Uterus (tissue), 4 donors: ENCODE measurements at regions of chr19 and their contacts with region 1.

Region 1: GRCh38 chr19:13850293-13850909 is 26.5 kb upstream of the NANOS3 start:
- DNase-seq: peak; percentile 79 to 92
- H3K4me3 ChIP-seq: peak overlapping the region; percentile 36 to 37
- H3K27ac ChIP-seq: peak overlapping the region; percentile 100
- H3K4me1 ChIP-seq: peaks cover 14 to 35% of the 10 kb centered on the region in 2 donors
- H3K27me3 ChIP-seq: no peaks in the 10 kb centered on the region
- CTCF ChIP-seq: no peak
- POLR2A ChIP-seq: peak in 1 of 2 donors; percentile 67

Region 2: DNA sequence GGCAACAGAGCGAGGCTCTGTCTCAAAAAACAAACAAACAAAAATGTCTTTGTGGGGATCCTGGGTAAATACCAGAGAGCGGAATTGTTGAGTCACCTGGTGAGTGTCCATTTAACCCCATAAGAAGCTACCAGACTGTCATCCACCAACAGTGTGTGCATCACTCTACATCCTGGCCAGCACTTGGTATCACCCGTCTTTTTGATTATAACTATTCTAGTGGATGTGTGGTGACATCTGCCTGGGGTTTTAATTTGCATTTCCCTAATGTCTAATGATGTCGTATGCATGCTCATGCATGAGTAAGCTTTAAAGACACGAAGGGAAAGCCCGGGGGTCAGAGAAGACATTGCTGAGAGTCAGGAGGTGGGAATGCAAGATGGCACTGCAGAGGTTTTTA is 212.7 kb before region 1 on chr19:
- intact Hi-C with region 1: no loop called
- DNase-seq: no peak
- H3K4me3 ChIP-seq: no peak overlapping the region
- H3K27ac ChIP-seq: no peak overlapping the region
- H3K4me1 ChIP-seq: no peaks in the 10 kb centered on the region
- H3K27me3 ChIP-seq: no peaks in the 10 kb centered on the region
- CTCF ChIP-seq: no peak
- POLR2A ChIP-seq: no peak

Region 3: GRCh38 chr19:13774217-13775191 is 75.9 kb before region 1 on chr19 and contains the start of gene C19orf53:
- intact Hi-C with region 1: no loop called
- DNase-seq: peak; percentile 89 to 90
- H3K4me3 ChIP-seq: peak within 1 kb of the TSS; percentile 85 to 99
- H3K27ac ChIP-seq: peak within 1 kb of the TSS; percentile 86 to 95
- H3K4me1 ChIP-seq: peaks cover 0 to 9% of the 10 kb centered on the region in 2 donors
- H3K27me3 ChIP-seq: no peaks in the 10 kb centered on the region
- CTCF ChIP-seq: peak in 2 of 4 experiments; percentile 26 to 43
- POLR2A ChIP-seq: peak; percentile 73 to 91
- total RNA-seq, gene C19orf53: 20.5 to 233 (median 77.3) TPM

Region 4: GRCh38 chr19:13794757-13795589 is 55.4 kb before region 1 on chr19 and contains the start of gene ZSWIM4:
- intact Hi-C with region 1: loop called (anchors 5 kb)
- DNase-seq: peak; percentile 98 to 99
- H3K4me3 ChIP-seq: peak within 1 kb of the TSS; percentile 76 to 95
- H3K27ac ChIP-seq: peak within 1 kb of the TSS; percentile 88 to 99
- H3K4me1 ChIP-seq: peaks cover 10 to 17% of the 10 kb centered on the region in 2 donors
- H3K27me3 ChIP-seq: no peaks in the 10 kb centered on the region
- CTCF ChIP-seq: no peak
- POLR2A ChIP-seq: peak; percentile 61 to 63
- total RNA-seq, gene ZSWIM4: 0.26 to 8.4 (median 6.0) TPM

Region 5: DNA sequence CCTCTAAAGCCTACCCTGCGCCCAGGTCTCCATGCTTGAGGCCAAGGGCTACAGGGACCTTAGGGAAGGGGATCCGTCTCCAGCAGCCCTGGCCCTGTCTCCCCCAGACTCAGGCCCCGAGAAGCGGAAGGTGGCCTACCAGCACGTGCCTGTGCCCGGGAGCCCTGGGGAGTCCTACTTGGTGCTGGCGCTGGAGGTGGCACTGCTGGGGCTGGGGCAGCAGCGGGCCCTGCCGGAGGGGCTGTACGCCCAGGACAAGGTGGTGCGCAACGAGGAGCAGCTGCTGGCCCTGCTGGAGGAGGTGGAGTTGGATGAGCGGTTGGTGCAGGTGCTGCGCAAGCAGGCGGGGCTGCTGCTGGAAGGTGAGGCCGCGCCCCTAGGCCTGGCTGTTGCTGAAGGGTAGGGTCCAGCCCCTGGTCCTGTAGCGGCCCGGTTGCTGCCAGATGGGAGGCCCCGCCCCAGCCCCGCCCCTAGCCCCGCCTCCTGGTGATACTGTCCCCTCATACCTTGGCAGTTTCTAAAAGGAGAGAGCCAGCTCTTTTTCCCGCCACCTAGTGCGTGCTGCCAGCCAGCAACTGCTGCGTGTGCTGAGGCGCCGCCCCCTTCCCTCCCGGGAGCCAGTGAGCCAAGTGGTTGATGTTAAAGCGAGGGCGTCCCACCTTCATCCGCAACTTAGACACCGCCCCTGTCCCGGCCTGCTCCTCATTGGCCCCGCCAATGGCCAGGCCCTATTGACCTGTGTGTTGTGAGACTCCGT is 32.6 kb before region 1 on chr19:
- intact Hi-C with region 1: no loop called
- DNase-seq: no peak
- H3K4me3 ChIP-seq: no peak overlapping the region
- H3K27ac ChIP-seq: no peak overlapping the region
- H3K4me1 ChIP-seq: no peaks in the 10 kb centered on the region
- H3K27me3 ChIP-seq: no peaks in the 10 kb centered on the region
- CTCF ChIP-seq: no peak
- POLR2A ChIP-seq: no peak